ENCODE measurements at regions of chr19 and their contacts with region 1.

Region 1: GRCh38 chr19:40089462-40089861 is 1.3 kb downstream of the ZNF780A start:
- DNase-seq: peak in 1 of 35 experiments; percentile 4
- ATAC-seq: no peak
- H3K4me3 ChIP-seq: peak overlapping the region; percentile 83 to 98
- H3K4me3 Mint-ChIP-seq: peak overlapping the region; percentile 96 to 100 (median 100)
- H3K27ac ChIP-seq: peak overlapping the region; percentile 91
- H3K27ac Mint-ChIP-seq: peak overlapping the region; percentile 99 to 100
- H3K4me1 ChIP-seq: peaks cover 10 to 12% of the 10 kb centered on the region in 2 experiments
- H3K4me1 Mint-ChIP-seq: peaks cover 43 to 49% (median 48%) of the 10 kb centered on the region in 3 donors
- H3K27me3 ChIP-seq: no peaks in the 10 kb centered on the region
- H3K27me3 Mint-ChIP-seq: peaks cover 0 to 3% of the 10 kb centered on the region in 2 donors

Region 2: GRCh38 chr19:39623221-39623620 is 466.2 kb before region 1 on chr19:
- CTCF ChIA-PET with region 1: no interaction called
- POLR2A ChIA-PET with region 1: no interaction called
- DNase-seq: no peak
- ATAC-seq: no peak
- H3K4me3 ChIP-seq: no peak overlapping the region
- H3K4me3 Mint-ChIP-seq: no peak overlapping the region
- H3K27ac ChIP-seq: no peak overlapping the region
- H3K27ac Mint-ChIP-seq: no peak overlapping the region
- H3K4me1 ChIP-seq: no peaks in the 10 kb centered on the region
- H3K4me1 Mint-ChIP-seq: no peaks in the 10 kb centered on the region
- H3K27me3 ChIP-seq: peaks cover 0 to 15% of the 10 kb centered on the region in 2 experiments
- H3K27me3 Mint-ChIP-seq: peaks cover 61 to 67% of the 10 kb centered on the region in 2 donors

Region 3: DNA sequence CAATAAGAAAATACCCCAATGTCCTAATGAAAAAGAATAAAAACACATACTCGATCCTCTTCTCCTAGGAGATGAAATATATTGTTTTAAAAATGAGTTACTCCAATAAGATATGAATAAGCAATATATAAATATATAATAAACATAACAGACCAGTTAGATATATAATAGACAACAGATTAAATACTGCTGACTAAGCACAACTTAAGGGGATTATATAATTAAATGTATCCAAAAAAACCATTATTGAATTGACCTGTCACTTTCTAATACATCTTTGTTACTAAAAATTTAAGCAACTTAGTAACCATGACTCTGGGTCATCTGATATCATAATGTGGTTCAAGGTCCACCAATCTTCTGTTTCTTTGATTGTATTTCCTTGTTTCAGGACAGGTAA is 19.4 kb before region 1 on chr19:
- CTCF ChIA-PET with region 1: no interaction called
- POLR2A ChIA-PET with region 1: interaction called, 5 to 11 read pairs
- DNase-seq: no peak
- ATAC-seq: no peak
- H3K4me3 ChIP-seq: no peak overlapping the region
- H3K4me3 Mint-ChIP-seq: no peak overlapping the region
- H3K27ac ChIP-seq: no peak overlapping the region
- H3K27ac Mint-ChIP-seq: no peak overlapping the region
- H3K4me1 ChIP-seq: no peaks in the 10 kb centered on the region
- H3K4me1 Mint-ChIP-seq: no peaks in the 10 kb centered on the region
- H3K27me3 ChIP-seq: no peaks in the 10 kb centered on the region
- H3K27me3 Mint-ChIP-seq: no peaks in the 10 kb centered on the region